ENCODE measurements at regions of chr3 and their contacts with region 1.

Region 1: DNA sequence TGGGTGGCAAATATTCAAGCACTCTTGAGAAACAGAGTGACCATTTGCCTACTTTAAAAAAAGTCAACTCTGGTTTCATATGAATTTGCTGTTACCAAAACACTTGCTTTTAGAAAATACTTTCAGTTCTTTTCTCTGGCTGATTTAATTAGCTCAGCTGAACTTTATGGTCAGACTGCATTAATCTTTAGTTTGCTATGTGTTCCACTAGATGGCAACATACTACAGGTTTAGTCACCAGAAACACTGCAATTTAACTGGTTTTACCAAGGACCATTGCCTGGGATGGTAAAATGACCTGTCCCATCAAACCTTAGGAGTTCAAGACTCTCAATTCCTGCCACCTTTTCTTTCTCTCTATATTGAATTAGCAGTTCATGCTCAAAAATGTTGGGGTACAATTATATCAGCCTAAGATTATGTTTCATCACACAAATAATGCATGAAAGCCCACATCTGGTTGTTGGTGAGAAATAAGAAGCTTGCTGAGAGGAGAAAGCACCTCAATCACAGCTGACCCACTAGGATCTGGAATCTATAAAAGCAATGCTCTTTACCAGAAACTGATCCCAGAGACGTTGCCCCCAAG is 14.2 kb downstream of the EIF4E3 start:
- DNase-seq: peak; percentile 51
- H3K4me3 ChIP-seq: no peak overlapping the region
- H3K27ac ChIP-seq: no peak overlapping the region
- H3K4me1 ChIP-seq: no peaks in the 10 kb centered on the region
- H3K27me3 ChIP-seq: peaks cover 0 to 4% of the 10 kb centered on the region in 2 experiments
- CTCF ChIP-seq: peak; percentile 37 to 49
- POLR2A ChIP-seq: no peak

Region 2: DNA sequence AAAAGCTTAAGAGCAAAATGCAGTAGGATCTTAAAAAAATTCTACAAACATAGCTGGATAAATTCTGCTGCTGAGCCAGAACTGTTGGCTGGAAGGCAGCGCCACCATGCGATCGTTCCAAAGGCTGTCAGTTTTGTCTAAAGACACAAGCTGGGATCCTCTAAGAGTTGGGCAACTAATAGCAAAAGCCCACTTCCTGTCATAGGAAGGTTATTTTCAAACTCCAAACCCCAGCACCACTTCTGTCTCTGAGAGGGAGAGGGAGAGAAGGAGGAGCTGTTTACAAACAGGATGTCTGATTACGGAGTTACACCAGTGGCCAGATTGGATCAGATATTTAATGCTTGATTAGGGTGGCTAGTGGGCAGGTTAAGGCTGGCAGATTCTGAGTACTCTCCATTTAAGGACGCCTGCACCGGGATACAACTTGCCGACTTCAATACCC is 29.8 kb before region 1 on chr3:
- CTCF ChIA-PET with region 1: interaction called, 15 read pairs
- POLR2A ChIA-PET with region 1: no interaction called
- dilution Hi-C with region 1: no loop called
- intact Hi-C with region 1: no loop called
- DNase-seq: peak; percentile 73
- H3K4me3 ChIP-seq: no peak overlapping the region
- H3K27ac ChIP-seq: no peak overlapping the region
- H3K4me1 ChIP-seq: peaks cover 5% of the 10 kb centered on the region
- H3K27me3 ChIP-seq: no peaks in the 10 kb centered on the region
- CTCF ChIP-seq: peak; percentile 75 to 80
- POLR2A ChIP-seq: no peak

Region 3: GRCh38 chr3:71725279-71725991 is 14.4 kb after region 1 on chr3 and contains the start of gene EIF4E3:
- CTCF ChIA-PET with region 1: interaction called, 27 read pairs
- POLR2A ChIA-PET with region 1: no interaction called
- dilution Hi-C with region 1: no loop called
- intact Hi-C with region 1: no loop called
- DNase-seq: no peak
- H3K4me3 ChIP-seq: peak within 1 kb of the TSS; percentile 6 to 54 (median 43)
- H3K27ac ChIP-seq: no peak within 1 kb of the TSS
- H3K4me1 ChIP-seq: peaks cover 5% of the 10 kb centered on the region
- H3K27me3 ChIP-seq: peaks cover 22 to 29% of the 10 kb centered on the region in 2 experiments
- CTCF ChIP-seq: no peak
- POLR2A ChIP-seq: no peak
- total RNA-seq, gene EIF4E3: 4.9 and 7.6 TPM in 2 replicates

Region 4: DNA sequence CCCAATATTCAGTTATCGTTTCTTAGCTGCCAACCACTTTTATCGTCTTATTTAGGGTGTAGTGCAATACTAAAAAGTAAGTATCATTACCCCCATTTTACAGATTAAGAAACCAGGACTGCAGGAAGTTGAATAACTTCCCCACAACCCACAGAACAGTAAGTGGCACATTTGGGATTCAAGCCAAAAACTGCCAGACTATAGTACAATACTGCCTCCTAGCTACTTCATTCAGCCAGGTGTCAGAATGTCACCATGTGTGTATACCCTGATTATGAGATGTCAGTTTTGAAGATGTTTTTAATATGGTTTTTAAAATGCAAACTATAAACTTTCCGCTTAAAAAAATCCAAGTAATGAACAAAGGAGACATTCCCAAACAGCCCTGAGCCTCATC is 148.1 kb after region 1 on chr3:
- CTCF ChIA-PET with region 1: interaction called, 4 read pairs
- POLR2A ChIA-PET with region 1: no interaction called
- dilution Hi-C with region 1: no loop called
- intact Hi-C with region 1: loop called (anchors 5 kb)
- DNase-seq: peak; percentile 8
- H3K4me3 ChIP-seq: no peak overlapping the region
- H3K27ac ChIP-seq: no peak overlapping the region
- H3K4me1 ChIP-seq: no peaks in the 10 kb centered on the region
- H3K27me3 ChIP-seq: no peaks in the 10 kb centered on the region
- CTCF ChIP-seq: no peak
- POLR2A ChIP-seq: no peak

Region 5: GRCh38 chr3:71875461-71875947 is 164.5 kb after region 1 on chr3:
- CTCF ChIA-PET with region 1: interaction called, 16 read pairs
- POLR2A ChIA-PET with region 1: no interaction called
- dilution Hi-C with region 1: no loop called
- intact Hi-C with region 1: no loop called
- DNase-seq: peak; percentile 74
- H3K4me3 ChIP-seq: no peak overlapping the region
- H3K27ac ChIP-seq: no peak overlapping the region
- H3K4me1 ChIP-seq: no peaks in the 10 kb centered on the region
- H3K27me3 ChIP-seq: no peaks in the 10 kb centered on the region
- CTCF ChIP-seq: peak; percentile 76 to 90
- POLR2A ChIP-seq: no peak

Region 6: DNA sequence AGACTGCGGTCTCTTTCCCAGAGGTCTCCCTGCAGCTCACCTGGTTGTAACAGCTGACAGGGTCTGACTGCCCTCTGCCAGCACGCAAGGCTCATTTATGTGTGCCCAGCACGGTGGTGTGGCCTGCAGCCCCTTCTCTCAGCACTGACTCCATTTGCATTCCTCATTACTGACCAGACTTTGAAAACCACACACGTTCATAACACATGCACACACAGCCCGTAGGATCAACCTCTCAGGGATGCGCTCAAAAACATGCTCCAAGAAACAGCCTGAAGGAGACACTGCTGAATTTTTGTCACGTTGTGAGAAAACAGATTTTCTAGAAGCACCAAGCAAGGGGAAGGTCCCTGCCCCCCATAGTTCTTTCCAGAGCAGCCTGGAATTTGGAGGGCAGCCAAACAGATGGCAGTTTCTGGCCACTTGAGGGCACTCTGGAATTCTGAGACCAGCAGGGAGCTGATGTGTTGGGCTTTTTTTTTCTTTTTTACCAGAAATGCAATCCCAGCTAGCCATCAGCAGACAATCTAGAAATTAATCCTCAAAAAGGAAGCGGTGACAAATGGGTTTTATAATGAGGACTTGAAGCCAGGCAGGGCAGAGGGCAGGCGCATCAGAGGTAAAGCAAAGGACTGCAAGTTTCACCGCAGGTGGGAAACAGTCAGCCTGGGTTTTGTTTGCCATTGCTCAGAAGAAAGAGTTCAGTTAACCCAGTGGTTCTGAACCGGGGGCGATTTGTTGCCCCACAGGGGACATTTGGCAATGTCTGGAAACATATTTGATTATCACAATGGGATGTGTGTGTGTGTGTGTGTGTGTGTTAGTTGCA is 244.5 kb after region 1 on chr3:
- CTCF ChIA-PET with region 1: interaction called, 3 read pairs
- POLR2A ChIA-PET with region 1: no interaction called
- dilution Hi-C with region 1: no loop called
- intact Hi-C with region 1: loop called (anchors 1 kb)
- DNase-seq: peak; percentile 77
- H3K4me3 ChIP-seq: no peak overlapping the region
- H3K27ac ChIP-seq: no peak overlapping the region
- H3K4me1 ChIP-seq: no peaks in the 10 kb centered on the region
- H3K27me3 ChIP-seq: peaks cover 0 to 9% of the 10 kb centered on the region in 2 experiments
- CTCF ChIP-seq: peak; percentile 65 to 77
- POLR2A ChIP-seq: no peak

Region 7: GRCh38 chr3:73086071-73086494 is 1375.1 kb after region 1 on chr3:
- CTCF ChIA-PET with region 1: interaction called, 6 read pairs
- POLR2A ChIA-PET with region 1: no interaction called
- dilution Hi-C with region 1: no loop called
- intact Hi-C with region 1: loop called (anchors 10 kb)
- DNase-seq: peak; percentile 44
- H3K4me3 ChIP-seq: no peak overlapping the region
- H3K27ac ChIP-seq: no peak overlapping the region
- H3K4me1 ChIP-seq: no peaks in the 10 kb centered on the region
- H3K27me3 ChIP-seq: no peaks in the 10 kb centered on the region
- CTCF ChIP-seq: peak; percentile 55 to 64
- POLR2A ChIP-seq: no peak